OCI-LY7 (cell line): ENCODE measurements at regions of chr1 and their contacts with region 1.

Region 1: DNA sequence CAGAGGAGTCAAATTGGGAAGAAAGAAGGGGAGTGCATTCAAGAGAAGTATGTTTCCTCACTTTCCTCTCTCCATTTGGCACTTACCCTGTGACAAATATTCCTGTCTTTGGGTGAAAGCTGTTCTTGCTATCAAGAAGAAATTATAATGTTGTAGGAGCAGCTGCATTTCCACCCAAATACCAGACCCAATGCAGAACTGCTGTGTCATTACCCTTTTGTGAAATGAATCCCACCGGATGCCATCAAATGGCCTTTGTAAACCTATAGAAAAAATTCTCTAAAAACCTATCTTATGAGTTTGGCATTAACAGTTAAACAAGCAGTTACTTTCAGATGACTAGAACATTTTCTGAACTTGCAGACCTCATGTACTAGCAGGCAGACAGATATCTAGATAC is 16.7 kb upstream of the PALMD start:
- DNase-seq: no peak
- H3K4me3 ChIP-seq: no peak overlapping the region
- H3K27ac ChIP-seq: no peak overlapping the region
- H3K4me1 ChIP-seq: no peaks in the 10 kb centered on the region
- CTCF ChIP-seq: no peak

Region 2: GRCh38 chr1:99018313-99018712 is 610.9 kb before region 1 on chr1:
- CTCF ChIA-PET with region 1: no interaction called
- POLR2A ChIA-PET with region 1: no interaction called
- intact Hi-C with region 1: no loop called
- DNase-seq: no peak
- H3K4me3 ChIP-seq: no peak overlapping the region
- H3K27ac ChIP-seq: no peak overlapping the region
- H3K4me1 ChIP-seq: no peaks in the 10 kb centered on the region
- CTCF ChIP-seq: no peak

Region 3: GRCh38 chr1:99465176-99465900 is 163.8 kb before region 1 on chr1:
- CTCF ChIA-PET with region 1: no interaction called
- POLR2A ChIA-PET with region 1: no interaction called
- intact Hi-C with region 1: no loop called
- DNase-seq: no peak
- H3K4me3 ChIP-seq: no peak overlapping the region
- H3K27ac ChIP-seq: no peak overlapping the region
- H3K4me1 ChIP-seq: no peaks in the 10 kb centered on the region
- CTCF ChIP-seq: no peak

Region 4: DNA sequence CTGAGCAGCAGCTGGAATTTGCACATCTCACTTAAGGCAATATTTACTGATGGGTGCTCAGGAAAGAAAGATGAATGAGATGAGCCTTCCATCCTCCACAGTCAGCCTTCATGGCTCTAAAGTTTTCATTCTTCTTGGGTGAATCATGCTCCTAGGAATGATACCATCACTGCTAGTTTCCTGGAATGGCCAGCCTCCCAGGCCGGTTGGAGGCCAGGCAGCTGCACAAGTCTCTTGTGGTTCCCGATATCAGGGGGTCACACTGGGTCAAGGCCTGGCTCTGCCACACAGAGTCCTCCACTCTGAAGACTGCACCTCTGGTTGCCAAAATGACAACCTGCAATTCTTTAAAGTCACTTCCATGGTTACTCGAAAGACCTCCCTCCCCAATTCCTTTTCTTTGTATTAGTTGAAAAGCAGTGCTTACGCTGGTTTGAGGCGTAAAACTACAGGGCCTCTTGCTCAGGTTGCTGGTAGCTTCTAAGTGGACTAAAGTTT is 29.4 kb before region 1 on chr1:
- CTCF ChIA-PET with region 1: no interaction called
- POLR2A ChIA-PET with region 1: no interaction called
- intact Hi-C with region 1: no loop called
- DNase-seq: no peak
- H3K4me3 ChIP-seq: no peak overlapping the region
- H3K27ac ChIP-seq: no peak overlapping the region
- H3K4me1 ChIP-seq: no peaks in the 10 kb centered on the region
- CTCF ChIP-seq: no peak

Region 5: GRCh38 chr1:99659755-99660210 is 30.6 kb after region 1 on chr1:
- CTCF ChIA-PET with region 1: no interaction called
- POLR2A ChIA-PET with region 1: interaction called, 10 read pairs
- intact Hi-C with region 1: no loop called
- DNase-seq: no peak
- H3K4me3 ChIP-seq: no peak overlapping the region
- H3K27ac ChIP-seq: no peak overlapping the region
- H3K4me1 ChIP-seq: no peaks in the 10 kb centered on the region
- CTCF ChIP-seq: no peak

Region 6: DNA sequence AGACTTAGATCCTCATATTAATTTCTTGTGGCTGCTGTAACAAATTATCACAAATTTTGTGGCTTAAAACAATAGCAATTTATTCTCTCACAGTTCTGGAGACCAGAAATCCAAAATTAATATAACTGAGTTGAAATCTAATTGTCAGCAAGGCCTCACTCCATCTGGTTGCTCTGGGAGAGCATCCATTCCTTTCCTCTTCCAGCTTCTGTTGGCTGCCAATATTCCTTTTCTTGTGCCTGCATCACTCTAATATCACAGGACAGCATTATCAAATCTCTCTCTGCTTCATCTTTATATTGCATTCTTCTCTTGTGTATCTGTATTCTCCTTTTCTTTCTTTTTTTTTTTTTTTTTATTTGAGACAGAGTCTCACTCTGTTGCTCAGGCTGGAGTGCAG is 349.9 kb after region 1 on chr1:
- CTCF ChIA-PET with region 1: no interaction called
- POLR2A ChIA-PET with region 1: no interaction called
- intact Hi-C with region 1: no loop called
- DNase-seq: no peak
- H3K4me3 ChIP-seq: no peak overlapping the region
- H3K27ac ChIP-seq: no peak overlapping the region
- H3K4me1 ChIP-seq: no peaks in the 10 kb centered on the region
- CTCF ChIP-seq: no peak